ENCODE measurements at regions of chr2 and their contacts with region 1.

Region 1: DNA sequence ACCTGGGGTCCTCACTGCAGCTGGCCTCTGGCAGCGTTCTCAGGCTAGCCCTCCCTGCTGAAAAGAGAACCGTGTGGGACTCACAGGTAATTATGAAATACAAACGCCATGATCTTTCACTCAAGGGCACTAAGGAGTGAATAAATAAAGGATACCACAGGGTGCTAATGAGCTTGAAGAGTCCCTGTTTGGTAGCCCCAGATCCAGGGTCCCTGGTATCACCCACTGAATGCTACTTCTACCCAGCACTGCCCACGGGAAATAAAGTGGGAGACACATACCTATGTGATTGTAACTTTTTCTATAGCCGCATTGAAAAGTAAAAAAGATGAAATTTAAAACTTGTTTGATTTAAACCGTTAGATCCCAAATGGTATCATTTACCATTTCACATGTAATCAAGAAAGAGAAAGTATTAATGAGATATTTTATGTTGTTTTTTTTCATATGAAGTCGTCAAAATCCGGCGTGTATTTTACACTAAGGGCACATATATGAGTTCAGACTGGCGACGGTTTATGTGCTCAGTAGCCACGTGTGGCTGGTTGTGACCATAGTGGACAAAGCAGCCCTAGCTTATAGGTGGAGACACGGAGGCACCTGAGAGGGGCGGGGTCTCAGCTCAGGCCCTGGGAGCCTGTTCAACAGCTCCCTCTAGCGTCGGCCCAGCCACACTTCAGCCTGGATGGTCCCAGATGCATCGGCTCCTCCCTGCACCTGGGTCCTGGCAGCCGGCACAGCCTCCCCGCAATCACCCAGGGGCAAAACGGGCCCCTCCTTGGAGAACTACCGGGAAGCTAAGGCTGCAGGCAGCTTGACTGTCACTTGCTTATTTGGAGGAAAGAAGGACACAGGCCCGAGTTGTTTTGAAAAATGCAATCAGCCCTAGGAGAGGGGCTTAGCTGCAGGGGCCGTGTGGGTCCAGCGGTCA is 39.2 kb downstream of the ODC1 start:
- DNase-seq: peak; percentile 65 to 85 (median 80)
- ATAC-seq: peak; percentile 91
- H3K4me3 ChIP-seq: peak overlapping the region; percentile 35
- H3K4me3 Mint-ChIP-seq: peak overlapping the region; percentile 64 to 89 (median 78)
- H3K27ac ChIP-seq: peak overlapping the region; percentile 33
- H3K27ac Mint-ChIP-seq: peak overlapping the region; percentile 66 to 96 (median 86)
- H3K4me1 ChIP-seq: peaks cover 29 to 39% of the 10 kb centered on the region in 2 donors
- H3K4me1 Mint-ChIP-seq: peaks cover 29 to 52% (median 41%) of the 10 kb centered on the region in 7 donors
- H3K27me3 ChIP-seq: no peaks in the 10 kb centered on the region
- H3K27me3 Mint-ChIP-seq: no peaks in the 10 kb centered on the region

Region 2: DNA sequence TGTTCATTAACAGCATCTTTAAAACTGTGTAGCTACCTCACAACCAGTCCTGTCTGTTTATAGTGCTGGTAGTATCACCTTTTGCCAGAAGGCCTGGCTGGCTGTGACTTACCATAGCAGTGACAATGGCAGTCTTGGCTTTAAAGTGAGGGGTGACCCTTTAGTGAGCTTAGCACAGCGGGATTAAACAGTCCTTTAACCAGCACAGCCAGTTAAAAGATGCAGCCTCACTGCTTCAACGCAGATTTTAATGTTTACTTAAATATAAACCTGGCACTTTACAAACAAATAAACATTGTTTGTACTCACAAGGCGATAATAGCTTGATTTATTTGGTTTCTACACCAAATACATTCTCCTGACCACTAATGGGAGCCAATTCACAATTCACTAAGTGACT is 279.4 kb before region 1 on chr2:
- CTCF ChIA-PET with region 1: interaction called, 50 read pairs
- POLR2A ChIA-PET with region 1: interaction called, 3 read pairs
- intact Hi-C with region 1: loop called (anchors 1 kb)
- DNase-seq: no peak
- ATAC-seq: no peak
- H3K4me3 ChIP-seq: no peak overlapping the region
- H3K4me3 Mint-ChIP-seq: no peak overlapping the region
- H3K27ac ChIP-seq: no peak overlapping the region
- H3K27ac Mint-ChIP-seq: no peak overlapping the region
- H3K4me1 ChIP-seq: peaks cover 0 to under 1% of the 10 kb centered on the region in 2 donors
- H3K4me1 Mint-ChIP-seq: peaks cover 2 to 68% (median 6%) of the 10 kb centered on the region in 7 donors
- H3K27me3 ChIP-seq: no peaks in the 10 kb centered on the region
- H3K27me3 Mint-ChIP-seq: peaks cover 0 to 9% (median 0%) of the 10 kb centered on the region in 5 donors

Region 3: DNA sequence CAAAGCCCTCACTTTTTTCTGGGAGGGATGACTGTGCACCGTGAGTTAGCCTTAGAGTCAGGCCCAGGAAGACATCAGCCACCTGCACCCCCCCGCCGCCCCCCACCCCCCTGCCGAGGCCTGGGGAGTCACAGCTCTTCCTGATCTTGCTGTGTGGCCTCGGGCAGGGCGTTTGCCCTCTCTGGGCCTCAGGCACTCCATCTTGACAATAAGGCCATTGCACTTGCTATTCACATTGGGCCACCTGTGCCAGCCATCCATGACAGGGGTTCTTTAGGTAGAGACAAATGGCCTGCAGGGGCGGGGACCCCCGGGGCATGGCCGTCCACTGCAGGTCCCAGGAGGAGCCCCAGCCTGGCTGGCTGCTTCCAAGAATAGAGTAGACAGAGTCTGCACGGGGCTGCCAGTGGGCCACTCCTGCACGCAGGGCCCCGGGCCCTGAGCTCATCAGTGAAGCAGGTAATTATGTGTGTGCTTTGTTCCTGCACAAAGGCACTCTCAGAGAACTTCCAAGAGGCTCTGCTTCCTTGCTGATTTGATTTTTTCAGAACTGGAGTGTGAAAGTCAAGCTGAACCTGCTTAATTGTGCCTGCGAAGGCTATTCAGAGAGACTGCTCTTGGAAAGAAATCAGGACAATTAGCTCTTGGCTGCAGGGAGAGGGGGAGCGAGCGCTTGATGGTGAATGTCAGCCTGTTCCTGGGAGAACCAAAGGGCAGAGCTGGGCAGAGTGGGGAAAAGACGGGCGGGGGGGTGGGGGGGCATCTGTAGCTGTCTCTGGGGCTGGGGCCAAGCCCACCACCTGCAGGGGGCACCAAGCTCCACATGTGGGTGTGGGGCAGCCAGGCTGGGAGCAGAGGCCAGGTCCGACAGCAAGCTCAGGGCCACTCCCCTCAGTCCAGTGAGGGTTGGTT is 246.1 kb before region 1 on chr2:
- CTCF ChIA-PET with region 1: interaction called, 8 read pairs
- POLR2A ChIA-PET with region 1: no interaction called
- intact Hi-C with region 1: loop called in 1 of 2 experiments (anchors 1 kb)
- DNase-seq: no peak
- ATAC-seq: no peak
- H3K4me3 ChIP-seq: no peak overlapping the region
- H3K4me3 Mint-ChIP-seq: no peak overlapping the region
- H3K27ac ChIP-seq: no peak overlapping the region
- H3K27ac Mint-ChIP-seq: peak overlapping the region in 1 of 9 donors; percentile 11
- H3K4me1 ChIP-seq: no peaks in the 10 kb centered on the region
- H3K4me1 Mint-ChIP-seq: peaks cover 9 to 27% (median 13%) of the 10 kb centered on the region in 7 donors
- H3K27me3 ChIP-seq: no peaks in the 10 kb centered on the region
- H3K27me3 Mint-ChIP-seq: no peaks in the 10 kb centered on the region

Region 4: GRCh38 chr2:10331027-10331701 is 77.8 kb before region 1 on chr2:
- CTCF ChIA-PET with region 1: interaction called, 48 read pairs
- POLR2A ChIA-PET with region 1: interaction called, 14 read pairs
- intact Hi-C with region 1: loop called (anchors 1 kb)
- DNase-seq: peak; percentile 41 to 79 (median 70)
- ATAC-seq: peak; percentile 58
- H3K4me3 ChIP-seq: peak overlapping the region; percentile 80
- H3K4me3 Mint-ChIP-seq: peak overlapping the region; percentile 85 to 97 (median 94)
- H3K27ac ChIP-seq: peak overlapping the region; percentile 82
- H3K27ac Mint-ChIP-seq: peak overlapping the region; percentile 92 to 99 (median 98)
- H3K4me1 ChIP-seq: peaks cover 32 to 65% of the 10 kb centered on the region in 2 donors
- H3K4me1 Mint-ChIP-seq: peaks cover 58 to 96% (median 93%) of the 10 kb centered on the region in 7 donors
- H3K27me3 ChIP-seq: no peaks in the 10 kb centered on the region
- H3K27me3 Mint-ChIP-seq: no peaks in the 10 kb centered on the region

Region 5: GRCh38 chr2:10434886-10435819 is 26.2 kb after region 1 on chr2:
- CTCF ChIA-PET with region 1: interaction called, 22 read pairs
- POLR2A ChIA-PET with region 1: interaction called, 6 read pairs
- intact Hi-C with region 1: loop called (anchors 1 kb)
- DNase-seq: peak; percentile 31 to 84 (median 64)
- ATAC-seq: peak; percentile 74
- H3K4me3 ChIP-seq: no peak overlapping the region
- H3K4me3 Mint-ChIP-seq: peak overlapping the region in 1 of 10 donors; percentile 27
- H3K27ac ChIP-seq: no peak overlapping the region
- H3K27ac Mint-ChIP-seq: peak overlapping the region in 2 of 9 donors; percentile 14 to 72
- H3K4me1 ChIP-seq: peaks cover 0 to 5% of the 10 kb centered on the region in 2 donors
- H3K4me1 Mint-ChIP-seq: peaks cover 0 to 20% (median 12%) of the 10 kb centered on the region in 7 donors
- H3K27me3 ChIP-seq: peaks cover 0 to 2% of the 10 kb centered on the region in 2 donors
- H3K27me3 Mint-ChIP-seq: peaks cover 0 to 6% (median 2%) of the 10 kb centered on the region in 5 donors

Region 6: DNA sequence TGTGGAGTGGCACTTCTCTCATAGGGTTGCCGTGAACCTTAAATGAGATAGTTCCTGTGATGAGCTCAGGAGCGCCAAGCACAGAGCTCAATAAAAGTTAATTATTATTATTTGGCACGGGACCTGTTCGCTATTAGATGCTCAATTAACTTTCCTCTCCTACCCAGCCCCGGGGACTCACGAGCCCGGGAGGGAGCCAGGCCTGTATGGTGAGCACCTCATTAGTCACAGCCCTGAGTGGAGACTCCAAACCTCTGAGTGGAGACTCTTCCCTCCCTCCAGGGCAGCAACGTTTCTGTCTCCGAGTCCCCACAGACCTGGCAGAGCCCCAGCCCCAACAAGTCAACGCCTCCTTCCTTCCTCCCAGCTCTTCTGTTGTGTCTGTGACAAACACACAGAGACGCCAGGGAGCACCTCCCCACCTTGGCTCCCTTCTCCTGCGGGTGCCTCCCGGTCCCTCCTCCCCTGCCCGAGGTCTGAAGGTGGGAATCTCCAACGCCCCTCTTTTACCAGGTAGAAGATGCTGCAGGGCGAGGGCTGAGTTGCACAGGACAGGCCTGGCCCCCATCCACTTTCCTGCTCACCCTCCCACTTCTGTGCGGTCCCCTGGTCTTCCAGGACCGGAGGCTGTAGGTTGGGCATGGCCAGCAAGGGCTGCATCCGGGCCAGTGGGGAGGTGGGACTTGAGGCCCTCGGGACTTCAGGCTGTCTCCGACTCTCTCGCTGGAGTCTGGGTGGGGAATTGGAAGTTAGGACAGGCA is 91.9 kb after region 1 on chr2:
- CTCF ChIA-PET with region 1: no interaction called
- POLR2A ChIA-PET with region 1: no interaction called
- intact Hi-C with region 1: no loop called
- DNase-seq: peak in 1 of 9 donors; percentile 16
- ATAC-seq: no peak
- H3K4me3 ChIP-seq: no peak overlapping the region
- H3K4me3 Mint-ChIP-seq: no peak overlapping the region
- H3K27ac ChIP-seq: no peak overlapping the region
- H3K27ac Mint-ChIP-seq: no peak overlapping the region
- H3K4me1 ChIP-seq: peaks cover 0 to 3% of the 10 kb centered on the region in 2 donors
- H3K4me1 Mint-ChIP-seq: peaks cover 0 to 5% (median 0%) of the 10 kb centered on the region in 7 donors
- H3K27me3 ChIP-seq: no peaks in the 10 kb centered on the region
- H3K27me3 Mint-ChIP-seq: peaks cover 5 to 29% (median 10%) of the 10 kb centered on the region in 5 donors

Region 7: GRCh38 chr2:12106440-12107080 is 1697.6 kb after region 1 on chr2:
- CTCF ChIA-PET with region 1: no interaction called
- POLR2A ChIA-PET with region 1: no interaction called
- intact Hi-C with region 1: no loop called
- DNase-seq: peak in 1 of 9 donors; percentile 40
- ATAC-seq: no peak
- H3K4me3 ChIP-seq: no peak overlapping the region
- H3K4me3 Mint-ChIP-seq: no peak overlapping the region
- H3K27ac ChIP-seq: no peak overlapping the region
- H3K27ac Mint-ChIP-seq: no peak overlapping the region
- H3K4me1 ChIP-seq: peaks cover 5 to 31% of the 10 kb centered on the region in 2 donors
- H3K4me1 Mint-ChIP-seq: peaks cover 16 to 57% (median 47%) of the 10 kb centered on the region in 7 donors
- H3K27me3 ChIP-seq: no peaks in the 10 kb centered on the region
- H3K27me3 Mint-ChIP-seq: no peaks in the 10 kb centered on the region

Measured in naive thymus-derived CD4-positive, alpha-beta T cell (primary cell).